B cell (primary cell): ENCODE measurements at regions of chr11 and their contacts with region 1.

Region 1: DNA sequence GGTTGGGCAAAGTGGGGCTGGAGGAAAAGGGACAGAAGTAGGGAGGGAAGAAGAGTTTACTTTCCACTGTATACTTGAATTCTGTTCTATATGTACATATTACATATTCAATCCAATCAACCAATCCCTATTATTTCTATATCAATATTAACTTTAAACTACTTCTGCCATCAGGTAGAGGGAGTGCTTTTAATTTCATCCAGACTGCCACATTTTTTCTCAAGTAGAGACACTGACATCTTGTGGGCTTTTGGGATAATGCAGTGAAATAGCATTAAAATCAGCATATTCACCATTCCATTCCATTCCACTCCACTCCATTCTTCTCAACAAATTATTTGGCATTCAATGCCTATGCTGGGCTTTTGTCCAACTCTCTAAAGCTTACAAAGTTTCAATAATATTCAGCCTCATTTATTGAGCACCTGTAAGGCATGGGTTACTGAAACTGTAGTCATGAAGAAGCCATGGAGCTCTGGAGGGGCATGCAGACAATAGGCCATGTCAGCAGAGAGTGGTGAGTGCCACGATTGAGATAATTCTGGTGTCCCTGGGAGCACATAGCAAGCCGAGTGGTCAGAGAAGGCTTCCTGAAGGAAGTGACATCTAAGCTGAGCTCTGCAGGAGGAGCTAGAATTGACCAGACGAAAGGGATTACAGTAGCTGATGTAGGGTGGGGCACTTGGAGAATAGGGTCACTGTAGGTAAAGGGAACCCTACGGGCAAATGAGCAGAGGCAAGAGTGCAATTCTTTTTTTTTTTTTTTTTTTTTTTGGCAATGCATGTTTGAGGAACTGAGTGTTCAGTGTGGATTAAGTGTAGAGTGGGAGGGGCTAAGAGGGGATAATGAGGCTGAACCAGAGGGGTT is 12.8 kb upstream of the CLPB start:
- DNase-seq: peak; percentile 67
- ATAC-seq: peak; percentile 60
- H3K4me3 ChIP-seq: no peak overlapping the region
- H3K4me3 Mint-ChIP-seq: no peak overlapping the region
- H3K27ac ChIP-seq: no peak overlapping the region
- H3K27ac Mint-ChIP-seq: no peak overlapping the region
- H3K4me1 ChIP-seq: no peaks in the 10 kb centered on the region
- H3K4me1 Mint-ChIP-seq: peaks cover 5% of the 10 kb centered on the region
- H3K27me3 ChIP-seq: peaks cover 0 to 3% (median 0%) of the 10 kb centered on the region in 4 experiments
- H3K27me3 Mint-ChIP-seq: peaks cover 23% of the 10 kb centered on the region
- CTCF ChIP-seq: peak; percentile 89

Region 2: DNA sequence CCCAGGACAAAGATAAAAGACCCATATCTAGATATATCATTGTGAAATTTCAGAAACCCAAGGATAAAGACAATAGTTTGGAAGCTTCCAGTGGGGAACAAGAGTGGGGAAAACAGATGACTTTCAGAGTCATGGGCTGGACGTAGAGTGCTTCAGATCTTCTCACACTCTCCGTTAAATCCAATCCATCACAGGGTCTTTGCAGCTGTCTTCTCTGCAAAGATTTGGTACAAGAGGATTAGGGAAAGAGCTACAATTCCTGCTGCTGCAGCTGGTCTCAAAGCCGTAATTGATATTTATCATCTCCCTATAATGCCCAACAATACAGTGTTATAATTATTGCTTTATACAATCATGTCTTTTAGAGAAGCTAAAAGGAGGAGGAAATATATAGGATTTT is 50.6 kb after region 1 on chr11:
- CTCF ChIA-PET with region 1: no interaction called
- POLR2A ChIA-PET with region 1: interaction called, 12 read pairs
- intact Hi-C with region 1: no loop called
- DNase-seq: no peak
- ATAC-seq: no peak
- H3K4me3 ChIP-seq: no peak overlapping the region
- H3K4me3 Mint-ChIP-seq: no peak overlapping the region
- H3K27ac ChIP-seq: no peak overlapping the region
- H3K27ac Mint-ChIP-seq: no peak overlapping the region
- H3K4me1 ChIP-seq: no peaks in the 10 kb centered on the region
- H3K4me1 Mint-ChIP-seq: no peaks in the 10 kb centered on the region
- H3K27me3 ChIP-seq: no peaks in the 10 kb centered on the region
- H3K27me3 Mint-ChIP-seq: peaks cover 3% of the 10 kb centered on the region
- CTCF ChIP-seq: no peak